Activated CD4-positive, alpha-beta memory T cell treated with anti-CD3 and anti-CD28 coated beads, Interleukin-2, amount 10 ng/mL, durations not matched to agents 7 days and 5 days (primary cell): ENCODE measurements at regions of chr1 and their contacts with region 1.

Region 1: GRCh38 chr1:156813750-156814570 is 2.7 kb downstream of the SH2D2A start:
- DNase-seq: peak; percentile 75
- H3K4me3 Mint-ChIP-seq: peak overlapping the region; percentile 96
- H3K27ac Mint-ChIP-seq: peak overlapping the region; percentile 100
- H3K4me1 Mint-ChIP-seq: peaks cover 79% of the 10 kb centered on the region
- H3K27me3 Mint-ChIP-seq: no peaks in the 10 kb centered on the region

Region 2: DNA sequence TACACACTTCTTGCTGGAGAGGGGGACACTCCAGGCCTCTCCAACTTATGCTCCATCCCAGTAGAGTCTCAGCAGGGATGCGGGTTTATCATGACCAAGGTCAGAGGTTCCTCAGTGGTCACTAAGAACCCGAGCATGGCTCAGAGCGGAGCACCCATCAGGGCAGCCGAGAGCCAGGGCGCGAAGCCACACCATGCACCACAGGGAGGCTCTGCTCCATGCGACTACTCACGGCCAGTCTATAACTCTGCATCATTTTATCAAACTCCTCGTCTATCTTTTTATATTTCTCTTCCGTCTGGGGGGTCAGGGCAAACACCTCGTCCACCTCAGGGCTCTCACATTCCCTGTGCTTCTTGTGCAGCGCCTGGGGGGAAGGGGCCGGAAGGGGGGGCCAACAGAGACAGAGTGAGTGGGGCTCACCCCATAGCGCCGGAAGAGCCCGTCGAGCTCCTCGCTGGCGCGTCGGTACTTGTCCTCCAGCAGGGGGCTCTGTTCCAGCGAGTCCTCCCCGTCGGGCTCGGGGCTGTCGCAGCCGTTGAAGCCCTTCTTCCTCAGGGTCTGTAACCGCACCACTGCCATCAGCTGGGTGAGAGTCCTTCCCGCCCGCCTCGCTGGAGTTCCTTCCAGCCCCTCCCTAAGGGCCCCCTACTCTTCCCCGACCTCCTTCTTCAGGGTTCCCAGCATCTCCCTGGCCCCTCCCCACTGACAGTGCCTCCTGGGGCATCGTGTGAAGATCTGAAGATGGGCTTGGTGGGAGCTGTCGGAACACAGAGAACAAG is 333.4 kb before region 1 on chr1:
- CTCF ChIA-PET with region 1: no interaction called
- POLR2A ChIA-PET with region 1: no interaction called
- DNase-seq: peak; percentile 74
- H3K4me3 Mint-ChIP-seq: no peak overlapping the region
- H3K27ac Mint-ChIP-seq: peak overlapping the region; percentile 53
- H3K4me1 Mint-ChIP-seq: peaks cover 51% of the 10 kb centered on the region
- H3K27me3 Mint-ChIP-seq: no peaks in the 10 kb centered on the region

Region 3: DNA sequence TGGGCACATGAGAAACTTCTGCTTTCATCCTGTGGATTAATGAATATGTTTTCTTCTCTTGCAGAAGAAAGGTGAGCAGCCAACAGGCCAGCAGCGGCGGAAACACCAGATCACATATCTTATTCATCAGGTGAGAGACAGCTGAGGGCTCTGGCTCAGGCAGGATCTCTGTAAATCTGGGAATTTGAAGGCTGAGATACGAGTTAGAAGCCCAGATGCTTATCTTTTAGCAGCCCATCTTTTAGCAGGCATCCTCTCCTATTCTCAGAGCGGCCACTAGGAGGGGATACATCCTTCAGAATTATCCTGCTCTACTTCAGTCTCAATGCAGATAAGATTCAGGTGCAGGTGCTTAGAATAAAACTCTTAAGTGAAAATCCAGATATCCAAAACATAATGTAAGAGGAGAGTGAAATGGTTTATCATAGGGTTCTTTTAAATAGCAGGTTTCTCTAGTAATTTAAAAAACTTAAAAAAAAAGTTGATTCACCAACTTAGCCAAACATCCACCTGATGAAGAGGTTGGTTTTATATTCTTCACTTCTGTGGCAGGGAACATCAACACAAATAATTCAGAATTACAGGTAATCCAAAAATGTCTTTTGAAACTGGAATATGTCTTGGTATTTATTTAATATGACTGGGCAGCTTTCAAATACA is 16.6 kb before region 1 on chr1:
- CTCF ChIA-PET with region 1: interaction called, 27 read pairs
- POLR2A ChIA-PET with region 1: interaction called, 126 read pairs
- DNase-seq: peak; percentile 70
- H3K4me3 Mint-ChIP-seq: no peak overlapping the region
- H3K27ac Mint-ChIP-seq: no peak overlapping the region
- H3K4me1 Mint-ChIP-seq: peaks cover 24% of the 10 kb centered on the region
- H3K27me3 Mint-ChIP-seq: no peaks in the 10 kb centered on the region

Region 4: GRCh38 chr1:156876281-156876680 is 62.3 kb after region 1 on chr1:
- CTCF ChIA-PET with region 1: no interaction called
- POLR2A ChIA-PET with region 1: no interaction called
- DNase-seq: no peak
- H3K4me3 Mint-ChIP-seq: no peak overlapping the region
- H3K27ac Mint-ChIP-seq: no peak overlapping the region
- H3K4me1 Mint-ChIP-seq: no peaks in the 10 kb centered on the region
- H3K27me3 Mint-ChIP-seq: peaks cover 48% of the 10 kb centered on the region